GM10248 (cell line): ENCODE measurements at regions of chr18 and their contacts with region 1.

Region 1: GRCh38 chr18:68738564-68738963 is 23.7 kb upstream of the TMX3 start:
- DNase-seq: no peak
- CTCF ChIP-seq: no peak

Region 2: DNA sequence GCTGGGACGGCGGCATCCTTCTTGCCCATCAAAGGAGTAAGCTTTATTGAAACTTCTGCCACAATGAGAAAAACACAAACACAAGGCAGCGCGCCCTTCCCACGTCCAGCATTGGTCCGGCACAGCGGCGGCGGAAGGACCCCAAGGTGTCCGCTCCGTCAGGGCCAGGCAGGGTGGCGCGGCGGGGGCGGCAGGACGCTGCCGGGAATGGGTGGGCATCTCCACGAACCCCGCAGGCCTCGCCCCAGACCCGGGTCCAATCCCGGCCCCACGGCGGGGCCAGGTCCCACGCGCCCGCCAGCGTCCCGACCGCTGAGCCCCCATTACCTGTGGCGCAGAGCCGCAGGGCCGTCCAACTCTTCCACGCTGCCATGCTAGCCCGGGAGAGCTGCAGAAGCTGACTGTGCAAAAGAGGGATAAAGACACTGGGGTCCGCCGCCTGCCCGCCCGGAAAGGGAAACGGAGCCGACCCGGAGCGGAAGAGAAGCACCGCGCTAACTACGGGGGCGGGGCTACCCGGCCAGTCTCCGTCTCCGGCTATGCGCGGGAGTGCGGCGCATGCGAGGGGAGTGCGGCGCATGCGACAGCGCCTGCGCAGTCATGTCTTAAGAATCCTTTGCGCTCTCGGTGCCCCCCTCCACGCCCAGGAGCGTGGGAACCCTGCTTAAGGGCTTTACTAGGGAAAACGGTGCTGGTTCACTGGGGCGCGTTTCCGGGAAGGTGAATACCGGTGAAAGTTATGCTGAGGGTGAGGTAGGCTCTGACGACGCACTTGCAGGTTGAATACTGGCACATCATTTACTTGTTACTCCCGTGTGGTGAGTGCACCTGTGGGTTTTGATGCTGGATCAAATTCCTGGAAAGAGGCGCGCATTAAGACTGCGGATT is 23.7 kb before region 1 on chr18 and contains the start of gene TMX3:
- CTCF ChIA-PET with region 1: interaction called, 5 read pairs
- POLR2A ChIA-PET with region 1: interaction called, 11 read pairs
- DNase-seq: peak; percentile 97
- CTCF ChIP-seq: no peak